HepG2 (cell line): ENCODE measurements at regions of chrX and their contacts with region 1.

Region 1: GRCh38 chrX:11758400-11759171 is 549 bp downstream of the MSL3 start:
- DNase-seq: peak; percentile 60
- ATAC-seq: peak; percentile 76
- H3K4me3 ChIP-seq: peak overlapping the region; percentile 81 to 85 (median 85)
- H3K27ac ChIP-seq: peak overlapping the region; percentile 68
- H3K4me1 ChIP-seq: peaks cover 29% of the 10 kb centered on the region
- H3K27me3 ChIP-seq: peaks cover 2 to 13% of the 10 kb centered on the region in 2 experiments; a peak in 3 of 5 replicates
- CTCF ChIP-seq: peak; percentile 65
- EP300 ChIP-seq: no peak
- POLR2A ChIP-seq: no peak
- RAD21 ChIP-seq: no peak

Region 2: GRCh38 chrX:11143931-11144678 is 614.5 kb before region 1 on chrX:
- CTCF ChIA-PET with region 1: no interaction called
- POLR2A ChIA-PET with region 1: no interaction called
- in situ Hi-C with region 1: loop called (anchors 25 kb)
- intact Hi-C with region 1: no loop called
- DNase-seq: peak; percentile 55
- ATAC-seq: peak; percentile 85
- H3K4me3 ChIP-seq: no peak overlapping the region
- H3K27ac ChIP-seq: no peak overlapping the region
- H3K4me1 ChIP-seq: no peaks in the 10 kb centered on the region
- H3K27me3 ChIP-seq: no peaks in the 10 kb centered on the region; a peak in 1 of 5 replicates
- CTCF ChIP-seq: peak; percentile 70
- EP300 ChIP-seq: no peak
- POLR2A ChIP-seq: no peak
- RAD21 ChIP-seq: no peak